ENCODE measurements at regions of chr5 and their contacts with region 1.

Region 1: GRCh38 chr5:131796793-131797693 is at the start of gene FNIP1:
- DNase-seq: peak; percentile 100
- ATAC-seq: peak; percentile 97 to 98 (median 98)
- H3K4me3 ChIP-seq: peak within 1 kb of the TSS; percentile 86 to 99 (median 97)
- H3K27ac ChIP-seq: peak within 1 kb of the TSS; percentile 97 to 100 (median 99)
- H3K4me1 ChIP-seq: peaks cover 0 to 46% (median 30%) of the 10 kb centered on the region in 12 donors
- H3K27me3 ChIP-seq: no peaks in the 10 kb centered on the region
- CTCF ChIP-seq: peak in 3 of 12 donors; percentile 14 to 26 (median 20)
- POLR2A ChIP-seq: peak; percentile 86 to 97
- total RNA-seq, gene FNIP1: 27.5 to 41.3 (median 35.1) TPM

Region 2: GRCh38 chr5:131589510-131590348 is 207.3 kb before region 1 on chr5:
- intact Hi-C with region 1: loop called in 3 of 10 experiments (anchors 10 kb)
- DNase-seq: peak in 1 of 5 donors; percentile 25
- ATAC-seq: peak in 3 of 4 donors; percentile 63 to 68 (median 68)
- H3K4me3 ChIP-seq: no peak overlapping the region
- H3K27ac ChIP-seq: no peak overlapping the region
- H3K4me1 ChIP-seq: peaks cover 0 to 21% (median 17%) of the 10 kb centered on the region in 12 donors
- H3K27me3 ChIP-seq: no peaks in the 10 kb centered on the region
- CTCF ChIP-seq: peak; percentile 72 to 95 (median 85)
- POLR2A ChIP-seq: no peak

Region 3: DNA sequence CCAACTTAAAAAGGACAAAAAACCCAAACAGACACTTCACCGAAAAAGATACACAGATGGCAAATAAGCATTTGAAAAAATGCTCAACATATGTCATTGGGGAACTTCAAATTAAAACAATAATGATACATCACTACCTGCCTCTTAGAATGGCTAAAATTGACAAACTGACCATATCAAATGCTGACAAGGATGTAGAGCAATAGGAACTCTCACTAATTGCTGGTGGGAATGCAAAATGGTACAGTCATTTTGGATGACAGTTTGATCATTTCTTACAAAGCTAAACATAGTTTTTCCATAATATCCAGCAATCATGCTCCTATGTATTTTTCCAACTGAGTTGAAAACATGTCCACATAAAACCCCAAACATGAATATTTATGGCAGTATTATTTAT is 103.1 kb before region 1 on chr5:
- intact Hi-C with region 1: loop called in 1 of 10 experiments (anchors 10 kb)
- DNase-seq: no peak
- ATAC-seq: no peak
- H3K4me3 ChIP-seq: no peak overlapping the region
- H3K27ac ChIP-seq: no peak overlapping the region
- H3K4me1 ChIP-seq: no peaks in the 10 kb centered on the region
- H3K27me3 ChIP-seq: no peaks in the 10 kb centered on the region
- CTCF ChIP-seq: no peak
- POLR2A ChIP-seq: no peak

Region 4: GRCh38 chr5:131720714-131721113 is 76.3 kb before region 1 on chr5:
- intact Hi-C with region 1: loop called in 1 of 10 experiments (anchors 5 kb)
- DNase-seq: no peak
- ATAC-seq: peak in 2 of 4 donors; percentile 24 to 28
- H3K4me3 ChIP-seq: no peak overlapping the region
- H3K27ac ChIP-seq: no peak overlapping the region
- H3K4me1 ChIP-seq: peaks cover 0 to 14% (median 0%) of the 10 kb centered on the region in 12 donors
- H3K27me3 ChIP-seq: no peaks in the 10 kb centered on the region
- CTCF ChIP-seq: no peak
- POLR2A ChIP-seq: no peak

Region 5: DNA sequence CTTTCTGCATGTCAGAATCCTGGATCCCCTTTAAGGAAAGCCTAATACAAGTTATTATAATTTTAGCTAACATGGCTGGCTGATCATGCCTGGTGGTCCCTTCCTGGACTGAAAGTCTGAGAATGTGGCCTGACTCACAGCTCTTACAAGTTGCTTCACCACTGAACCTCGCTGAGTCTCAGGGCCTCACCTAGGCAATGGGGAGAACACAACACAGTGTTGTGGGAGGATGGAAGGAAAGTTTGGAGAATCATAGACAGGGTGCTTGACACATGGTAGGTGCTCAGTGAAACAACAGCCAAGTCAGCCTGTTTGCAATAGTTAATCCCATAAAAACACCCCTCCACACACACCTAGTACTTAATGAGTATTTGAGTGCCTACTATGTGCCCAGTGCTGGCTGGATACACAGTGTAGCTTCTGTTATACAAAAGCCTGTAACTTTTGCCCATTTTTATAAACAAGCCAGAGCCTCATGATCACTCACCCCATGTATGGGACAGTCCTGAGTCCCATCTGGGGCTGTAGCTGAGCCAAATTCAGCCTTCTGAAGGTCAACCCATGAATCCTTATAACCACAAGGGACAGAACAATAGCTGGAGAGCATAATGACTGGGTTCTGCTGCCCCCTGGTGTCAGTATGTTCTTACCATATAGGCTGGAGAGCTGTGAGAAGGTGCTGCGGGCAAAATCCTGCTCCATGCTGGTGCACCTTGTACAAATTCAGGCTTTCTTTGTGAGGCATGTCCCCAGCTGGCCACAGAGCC is 210.5 kb after region 1 on chr5:
- intact Hi-C with region 1: loop called in 1 of 10 experiments (anchors 5 kb)
- DNase-seq: peak; percentile 70 to 86 (median 72)
- ATAC-seq: peak; percentile 51 to 83 (median 78)
- H3K4me3 ChIP-seq: no peak overlapping the region
- H3K27ac ChIP-seq: no peak overlapping the region
- H3K4me1 ChIP-seq: peaks cover 0 to 48% (median 15%) of the 10 kb centered on the region in 12 donors
- H3K27me3 ChIP-seq: peaks cover 0 to 23% (median 6%) of the 10 kb centered on the region in 9 donors
- CTCF ChIP-seq: peak; percentile 62 to 83 (median 72)
- POLR2A ChIP-seq: no peak

Measured in heart left ventricle (tissue), 16 donors.